Right ventricle myocardium inferior (tissue), 1 donor: ENCODE measurements at regions of chr7 and their contacts with region 1.

Region 1: DNA sequence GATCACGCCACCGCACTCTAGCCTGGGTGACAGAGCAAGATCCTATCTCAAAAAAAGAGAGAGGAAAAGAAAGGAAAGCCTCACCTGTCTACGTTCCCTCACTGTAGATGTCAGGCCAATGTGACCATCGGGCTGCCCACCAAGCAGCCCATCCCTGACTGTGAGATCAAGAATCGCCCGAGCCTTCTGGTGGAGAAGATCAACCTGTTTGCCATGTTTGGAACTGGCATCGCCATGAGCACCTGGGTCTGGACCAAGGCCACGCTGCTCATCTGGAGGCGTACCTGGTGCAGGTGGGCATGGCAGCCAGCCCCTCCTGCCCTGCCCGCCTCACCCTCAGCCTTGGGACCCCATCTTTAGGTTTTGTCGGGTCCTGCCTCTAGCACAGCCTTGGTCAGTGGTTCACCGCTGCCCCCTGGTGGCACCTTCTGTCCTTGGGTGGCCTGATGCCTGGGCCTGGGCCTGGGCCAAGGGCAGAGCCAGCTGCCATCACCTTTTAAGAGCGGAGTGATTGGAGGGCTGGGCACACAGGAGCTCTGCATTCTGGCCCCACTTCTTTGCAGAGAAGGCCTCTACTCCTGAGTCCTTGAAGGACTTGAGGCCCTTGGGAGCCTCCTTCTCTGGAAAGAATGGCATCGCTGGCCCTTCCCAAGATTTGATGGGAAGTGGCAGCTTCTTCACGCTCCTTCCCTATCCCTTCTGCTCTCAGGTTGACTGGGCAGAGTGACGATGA is 14.4 kb upstream of the AHCYL2 start:
- DNase-seq: peak; percentile 92
- ATAC-seq: peak; percentile 92

Region 2: GRCh38 chr7:129136887-129137642 is 73.4 kb before region 1 on chr7:
- intact Hi-C with region 1: no loop called
- DNase-seq: no peak
- ATAC-seq: no peak

Region 3: GRCh38 chr7:129163875-129164544 is 46.4 kb before region 1 on chr7:
- intact Hi-C with region 1: loop called (anchors 2 kb)
- DNase-seq: no peak
- ATAC-seq: no peak

Region 4: DNA sequence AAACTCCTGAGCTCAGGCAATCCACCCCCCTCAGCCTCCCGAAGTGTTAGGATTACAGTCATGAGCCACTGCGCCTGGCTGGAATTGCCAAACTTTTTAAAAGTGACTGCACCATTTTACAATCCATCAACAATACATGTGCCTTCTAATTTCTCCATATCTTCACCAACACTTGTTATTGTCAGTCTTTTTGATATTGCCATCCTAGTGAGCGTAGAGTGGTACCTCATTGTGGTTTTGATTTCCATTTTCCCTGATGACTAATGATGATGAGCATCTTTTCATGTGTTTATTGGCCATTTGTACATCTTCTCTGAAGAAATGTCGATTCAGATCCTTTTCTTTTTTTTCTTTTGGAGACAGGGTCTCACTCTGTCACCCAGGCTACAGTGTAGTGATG is 202.1 kb after region 1 on chr7:
- intact Hi-C with region 1: no loop called
- DNase-seq: no peak
- ATAC-seq: no peak